Activated CD4-positive, alpha-beta T cell treated with anti-CD3 and anti-CD28 coated beads, Interleukin-2, amount 10 ng/mL, durations not matched to agents 24 days and 14 days (primary cell): ENCODE measurements at regions of chr3 and their contacts with region 1.

Region 1: DNA sequence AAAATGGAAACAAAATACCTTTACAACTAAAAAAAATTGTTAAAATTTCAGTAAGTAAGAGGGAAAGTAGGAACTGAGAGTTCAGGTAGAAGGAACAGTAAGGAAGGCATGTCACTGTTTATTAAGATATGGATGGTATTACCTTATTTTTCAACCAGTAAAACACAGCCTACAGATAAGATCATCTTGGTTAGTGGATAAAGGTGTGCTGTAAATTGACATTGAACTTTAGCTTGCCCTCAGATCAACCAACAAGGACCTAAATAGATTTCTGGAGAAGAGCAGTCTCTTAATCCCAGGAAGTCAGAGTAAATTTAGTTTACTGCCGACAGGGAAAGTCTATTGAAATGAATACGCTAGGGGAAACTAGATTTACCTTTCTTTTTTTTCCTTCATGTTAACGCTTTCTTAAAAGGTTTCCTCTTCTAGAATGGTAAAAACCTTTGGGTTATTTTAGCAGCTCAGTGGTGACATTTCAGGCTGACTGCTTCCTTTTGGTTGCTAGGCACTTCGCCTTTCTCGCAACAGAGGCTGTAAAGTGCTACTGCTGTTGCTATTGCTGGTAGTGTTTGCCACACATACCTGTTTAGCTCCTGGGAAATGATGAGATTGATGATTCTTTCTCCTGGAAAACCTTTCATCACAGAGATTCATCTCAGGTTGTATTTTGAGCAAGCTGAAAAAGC is 12.9 kb downstream of the DZIP3 start:
- DNase-seq: peak; percentile 84
- H3K4me3 Mint-ChIP-seq: peak overlapping the region; percentile 69
- H3K27ac Mint-ChIP-seq: peak overlapping the region; percentile 77
- H3K4me1 Mint-ChIP-seq: peaks cover 38% of the 10 kb centered on the region
- H3K27me3 Mint-ChIP-seq: no peaks in the 10 kb centered on the region

Region 2: DNA sequence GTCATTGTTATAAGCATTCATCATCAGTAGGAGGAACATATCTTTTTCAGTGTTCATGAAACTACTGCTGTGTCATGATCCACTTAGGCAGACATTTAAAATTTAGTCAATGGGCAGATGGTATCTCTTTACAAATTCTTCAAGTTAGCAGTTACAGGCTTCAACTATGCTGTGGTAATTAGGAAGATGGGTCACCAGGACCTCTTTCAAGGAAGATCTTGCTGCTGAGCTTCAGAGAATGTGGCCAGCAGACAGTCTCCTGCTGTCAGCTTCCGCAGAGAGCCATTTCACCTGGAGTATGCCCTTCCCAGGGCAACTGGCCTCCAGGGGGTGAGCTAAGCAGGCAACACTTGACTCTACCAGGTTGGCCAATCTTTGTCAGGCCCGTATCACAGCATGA is 399.6 kb before region 1 on chr3:
- intact Hi-C with region 1: no loop called
- DNase-seq: no peak
- H3K4me3 Mint-ChIP-seq: no peak overlapping the region
- H3K27ac Mint-ChIP-seq: no peak overlapping the region
- H3K4me1 Mint-ChIP-seq: peaks cover 8% of the 10 kb centered on the region
- H3K27me3 Mint-ChIP-seq: no peaks in the 10 kb centered on the region

Region 3: GRCh38 chr3:108791473-108791872 is 189.1 kb after region 1 on chr3:
- intact Hi-C with region 1: no loop called
- DNase-seq: no peak
- H3K4me3 Mint-ChIP-seq: no peak overlapping the region
- H3K27ac Mint-ChIP-seq: no peak overlapping the region
- H3K4me1 Mint-ChIP-seq: no peaks in the 10 kb centered on the region
- H3K27me3 Mint-ChIP-seq: peaks cover 9% of the 10 kb centered on the region

Region 4: GRCh38 chr3:108806316-108806715 is 203.9 kb after region 1 on chr3:
- intact Hi-C with region 1: loop called (anchors 5 kb)
- DNase-seq: peak; percentile 86
- H3K4me3 Mint-ChIP-seq: peak overlapping the region; percentile 28
- H3K27ac Mint-ChIP-seq: peak overlapping the region; percentile 76
- H3K4me1 Mint-ChIP-seq: peaks cover 15% of the 10 kb centered on the region
- H3K27me3 Mint-ChIP-seq: peaks cover 3% of the 10 kb centered on the region